ENCODE measurements at regions of chr20 and their contacts with region 1.

Region 1: DNA sequence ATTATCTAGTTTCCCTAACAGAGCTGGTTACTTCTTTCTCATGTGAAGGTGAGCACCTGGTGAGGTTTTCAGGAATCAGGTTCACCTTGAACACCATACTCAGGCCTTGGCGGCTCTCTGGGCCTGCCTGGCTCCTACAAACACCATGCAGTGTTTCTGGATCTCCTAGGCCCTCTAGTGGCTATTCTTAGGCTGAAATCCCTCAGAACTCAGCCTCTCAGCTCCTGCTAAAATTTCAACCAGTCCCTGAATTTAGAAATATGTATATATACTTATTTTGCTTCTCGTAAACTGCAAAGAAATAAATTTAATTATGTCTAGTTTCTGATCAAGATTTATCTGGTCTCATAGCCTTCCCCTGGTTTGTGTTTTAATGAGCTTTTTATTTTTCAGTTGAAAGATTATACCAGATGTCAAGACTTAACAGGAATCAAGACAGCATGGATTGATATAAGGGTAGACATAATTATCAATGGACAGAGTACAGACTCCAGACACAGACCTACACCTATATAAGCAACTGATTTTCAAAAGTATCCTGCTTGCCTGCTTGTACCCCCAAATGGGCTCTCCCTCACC is 55.9 kb downstream of the ANKEF1 start:
- DNase-seq: peak in 1 of 2 experiments; percentile 19
- H3K4me3 ChIP-seq: no peak overlapping the region
- H3K27ac ChIP-seq: no peak overlapping the region
- H3K4me1 ChIP-seq: peaks cover 0 to 3% (median 0%) of the 10 kb centered on the region in 4 experiments; a peak in 1 of 7 replicates
- H3K27me3 ChIP-seq: no peaks in the 10 kb centered on the region
- CTCF ChIP-seq: peak; percentile 39 to 77 (median 73)
- EP300 ChIP-seq: no peak
- POLR2A ChIP-seq: no peak
- RAD21 ChIP-seq: peak; percentile 83 to 88

Region 2: GRCh38 chr20:9958693-9959092 is 132.0 kb before region 1 on chr20:
- CTCF ChIA-PET with region 1: no interaction called
- POLR2A ChIA-PET with region 1: no interaction called
- DNase-seq: no peak
- H3K4me3 ChIP-seq: no peak overlapping the region
- H3K27ac ChIP-seq: no peak overlapping the region
- H3K4me1 ChIP-seq: peaks cover 0 to 4% (median 0%) of the 10 kb centered on the region in 4 experiments; a peak in 1 of 7 replicates
- H3K27me3 ChIP-seq: no peaks in the 10 kb centered on the region
- CTCF ChIP-seq: no peak
- EP300 ChIP-seq: no peak
- POLR2A ChIP-seq: no peak
- RAD21 ChIP-seq: no peak

Region 3: DNA sequence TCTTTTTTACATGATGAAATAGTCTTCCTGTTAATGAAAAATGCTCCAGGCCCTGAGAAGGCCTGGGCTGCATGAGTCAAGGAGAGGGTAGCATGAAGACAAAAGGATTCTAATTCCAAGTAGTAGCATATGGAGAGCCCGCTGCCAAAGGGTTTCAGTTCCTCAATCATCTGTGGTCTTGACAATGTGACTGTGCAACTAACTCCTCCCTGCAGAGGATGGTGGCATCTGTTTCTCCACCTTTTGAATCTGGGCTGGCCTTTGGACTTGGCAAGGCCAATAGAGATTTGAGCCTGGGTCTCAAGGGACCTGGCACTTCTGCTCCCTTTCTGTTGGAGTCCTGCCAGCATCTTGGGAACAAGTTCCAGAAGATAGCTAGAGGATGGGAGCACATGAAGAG is 91.0 kb before region 1 on chr20:
- CTCF ChIA-PET with region 1: no interaction called
- POLR2A ChIA-PET with region 1: no interaction called
- DNase-seq: no peak
- H3K4me3 ChIP-seq: no peak overlapping the region
- H3K27ac ChIP-seq: no peak overlapping the region
- H3K4me1 ChIP-seq: no peaks in the 10 kb centered on the region
- H3K27me3 ChIP-seq: no peaks in the 10 kb centered on the region
- CTCF ChIP-seq: no peak
- EP300 ChIP-seq: no peak
- POLR2A ChIP-seq: no peak
- RAD21 ChIP-seq: no peak

Region 4: DNA sequence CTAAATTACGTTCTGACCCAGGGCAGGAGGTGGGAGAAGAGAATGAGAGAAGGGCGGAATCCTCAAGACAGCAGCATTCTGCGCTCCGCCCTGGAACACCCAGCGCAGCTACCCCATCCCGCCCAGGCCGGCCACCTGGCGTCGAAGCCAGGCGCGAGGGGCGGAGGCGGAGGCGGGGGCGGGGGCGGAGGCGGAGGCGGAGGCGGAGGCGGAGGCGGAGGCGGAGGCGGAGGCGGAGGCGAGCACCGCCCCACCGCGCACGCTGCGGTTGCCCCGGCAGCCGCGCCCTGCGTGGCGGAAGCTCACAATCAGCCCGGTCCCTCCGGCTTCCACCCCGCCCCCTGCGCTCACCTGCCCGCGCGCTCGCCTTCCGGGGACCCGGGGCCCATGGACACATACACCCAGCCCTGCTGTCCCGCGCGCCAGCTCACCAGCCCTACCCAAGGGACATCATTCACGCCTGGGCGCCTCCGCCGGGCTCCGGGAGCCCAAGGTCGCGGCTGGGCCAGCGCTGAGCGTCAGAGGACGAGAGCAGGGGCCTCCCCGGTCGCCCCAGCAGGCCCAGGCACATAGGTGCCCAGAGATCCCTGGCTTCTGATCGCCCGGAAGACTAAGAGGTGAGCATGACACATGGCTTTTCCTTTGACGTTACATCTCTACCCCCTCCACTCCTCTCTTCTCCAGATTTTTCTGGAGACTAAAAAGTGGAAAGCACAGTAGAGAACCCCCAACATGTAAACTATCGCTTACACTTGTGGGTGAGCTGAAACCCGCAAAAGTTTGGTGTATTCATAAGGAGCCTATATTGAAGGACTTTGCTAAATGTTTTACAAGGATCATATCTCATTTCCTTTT is 55.7 kb before region 1 on chr20 and contains the start of gene ANKEF1:
- CTCF ChIA-PET with region 1: interaction called, 12 read pairs
- POLR2A ChIA-PET with region 1: no interaction called
- DNase-seq: peak; percentile 29 to 88
- H3K4me3 ChIP-seq: peak within 1 kb of the TSS; percentile 42 to 73 (median 53)
- H3K27ac ChIP-seq: no peak within 1 kb of the TSS
- H3K4me1 ChIP-seq: peaks cover 0 to 3% (median 1%) of the 10 kb centered on the region in 4 experiments; a peak in 2 of 7 replicates
- H3K27me3 ChIP-seq: no peaks in the 10 kb centered on the region
- CTCF ChIP-seq: 0 out of 4 replicates have a peak, but pooled peaks of 1 of the 3 experiments have one; percentile 8
- EP300 ChIP-seq: peak in 1 of 2 experiments; percentile 11; a peak in 1 of 3 replicates
- POLR2A ChIP-seq: peak in 1 of 2 experiments; percentile 75; a peak in 2 of 3 replicates
- RAD21 ChIP-seq: peak in 1 of 2 experiments; percentile 17; a peak in 1 of 4 replicates
- total RNA-seq, gene ANKEF1: 9.8 and 10.0 TPM in 2 replicates

Region 5: GRCh38 chr20:10060226-10060625 is 30.5 kb before region 1 on chr20:
- CTCF ChIA-PET with region 1: interaction called, 15 read pairs
- POLR2A ChIA-PET with region 1: no interaction called
- DNase-seq: no peak
- H3K4me3 ChIP-seq: no peak overlapping the region
- H3K27ac ChIP-seq: no peak overlapping the region
- H3K4me1 ChIP-seq: peaks cover 0 to 4% (median 0%) of the 10 kb centered on the region in 4 experiments; a peak in 2 of 7 replicates
- H3K27me3 ChIP-seq: no peaks in the 10 kb centered on the region
- CTCF ChIP-seq: no peak
- EP300 ChIP-seq: no peak
- POLR2A ChIP-seq: no peak
- RAD21 ChIP-seq: no peak

Region 6: GRCh38 chr20:10105046-10105445 is 14.4 kb after region 1 on chr20:
- CTCF ChIA-PET with region 1: interaction called, 13 read pairs
- POLR2A ChIA-PET with region 1: no interaction called
- DNase-seq: no peak
- H3K4me3 ChIP-seq: no peak overlapping the region
- H3K27ac ChIP-seq: no peak overlapping the region
- H3K4me1 ChIP-seq: no peaks in the 10 kb centered on the region
- H3K27me3 ChIP-seq: no peaks in the 10 kb centered on the region
- CTCF ChIP-seq: no peak
- EP300 ChIP-seq: no peak
- POLR2A ChIP-seq: no peak
- RAD21 ChIP-seq: no peak

Region 7: DNA sequence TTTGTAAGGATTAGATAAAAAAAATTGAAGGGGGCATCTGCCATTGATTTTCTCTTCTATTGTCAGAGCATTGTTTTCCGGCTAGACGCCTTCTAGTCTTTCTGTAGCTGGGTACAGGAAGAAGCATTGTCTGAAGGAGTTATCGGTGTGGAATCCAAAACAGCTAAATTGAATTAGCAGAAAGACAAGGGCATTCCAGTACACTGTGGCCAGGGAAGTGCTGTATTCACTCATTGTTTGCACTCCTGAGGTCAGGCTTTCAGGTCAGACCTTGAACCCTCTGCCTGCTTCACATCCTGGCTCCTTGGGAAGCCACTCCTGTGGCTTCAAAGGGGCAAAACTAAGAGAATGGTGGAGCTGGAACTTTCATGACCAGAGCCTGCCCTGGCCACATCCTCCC is 46.9 kb after region 1 on chr20:
- CTCF ChIA-PET with region 1: interaction called, 22 read pairs
- POLR2A ChIA-PET with region 1: no interaction called
- DNase-seq: no peak
- H3K4me3 ChIP-seq: no peak overlapping the region
- H3K27ac ChIP-seq: no peak overlapping the region
- H3K4me1 ChIP-seq: peaks cover 0 to 4% (median 3%) of the 10 kb centered on the region in 4 experiments; a peak in 5 of 7 replicates
- H3K27me3 ChIP-seq: no peaks in the 10 kb centered on the region; a peak in 1 of 7 replicates
- CTCF ChIP-seq: no peak
- EP300 ChIP-seq: no peak
- POLR2A ChIP-seq: no peak
- RAD21 ChIP-seq: no peak

Region 8: DNA sequence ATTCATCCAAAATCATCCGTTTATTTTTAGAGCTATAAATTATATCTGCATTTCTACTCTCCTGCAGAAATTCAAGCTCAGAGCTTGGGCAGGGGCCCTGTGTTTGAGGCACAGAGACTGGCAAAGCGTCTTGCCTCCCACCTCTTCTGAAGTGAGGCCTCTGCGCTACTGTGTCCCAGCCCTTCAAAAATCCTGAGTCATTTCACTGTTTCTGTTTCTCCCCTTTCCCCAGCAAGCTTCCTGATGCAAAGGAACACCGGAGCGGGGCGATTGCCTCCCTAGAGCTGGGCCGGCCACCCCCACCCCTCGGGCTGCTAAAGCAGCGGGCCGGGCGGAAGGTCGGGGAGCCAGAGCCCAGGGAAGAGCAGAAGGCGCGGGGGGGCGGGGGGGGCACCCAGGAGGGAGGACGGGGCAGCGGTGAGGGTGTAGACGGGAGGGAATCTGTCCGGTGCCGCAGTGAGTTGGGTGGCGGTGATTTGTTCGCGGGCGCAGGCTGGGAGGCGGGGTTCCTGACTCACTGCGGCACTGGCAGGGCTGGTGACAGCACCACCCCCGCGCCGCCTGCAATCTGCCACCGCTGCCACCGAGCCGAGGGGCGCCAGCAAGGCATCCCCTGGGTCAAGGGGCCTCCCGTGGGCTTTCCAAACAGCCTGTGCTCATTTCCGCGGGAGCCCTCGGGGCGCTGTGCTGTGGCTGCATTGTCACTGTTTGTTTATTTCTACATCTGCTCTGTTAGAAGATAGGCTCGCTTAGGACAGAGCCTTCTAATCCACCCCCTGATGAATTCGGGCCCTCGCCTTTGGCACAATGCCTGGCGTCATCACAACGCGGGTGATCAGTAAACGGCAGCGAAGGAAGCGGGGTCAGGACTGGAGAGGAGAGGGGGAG is 81.4 kb after region 1 on chr20:
- CTCF ChIA-PET with region 1: interaction called, 14 read pairs
- POLR2A ChIA-PET with region 1: no interaction called
- DNase-seq: peak in 1 of 2 experiments; percentile 66
- H3K4me3 ChIP-seq: peak overlapping the region; percentile 37 to 68 (median 46)
- H3K27ac ChIP-seq: no peak overlapping the region
- H3K4me1 ChIP-seq: peaks cover 0 to 6% (median 2%) of the 10 kb centered on the region in 4 experiments; a peak in 4 of 7 replicates
- H3K27me3 ChIP-seq: peaks cover 0 to 8% (median 6%) of the 10 kb centered on the region in 4 experiments; a peak in 4 of 7 replicates
- CTCF ChIP-seq: no peak
- EP300 ChIP-seq: no peak
- POLR2A ChIP-seq: no peak
- RAD21 ChIP-seq: no peak

Region 9: GRCh38 chr20:10225439-10226060 is 134.9 kb after region 1 on chr20:
- CTCF ChIA-PET with region 1: interaction called, 15 read pairs
- POLR2A ChIA-PET with region 1: no interaction called
- DNase-seq: no peak
- H3K4me3 ChIP-seq: no peak overlapping the region
- H3K27ac ChIP-seq: no peak overlapping the region
- H3K4me1 ChIP-seq: no peaks in the 10 kb centered on the region; a peak in 1 of 7 replicates
- H3K27me3 ChIP-seq: no peaks in the 10 kb centered on the region
- CTCF ChIP-seq: peak in 2 of 3 experiments; percentile 58 to 60; a peak in 3 of 4 replicates
- EP300 ChIP-seq: no peak
- POLR2A ChIP-seq: no peak
- RAD21 ChIP-seq: peak; percentile 63 to 71

Measured in H1 (cell line).